ENCODE measurements at regions of chr9 and their contacts with region 1.

Region 1: GRCh38 chr9:18910916-18911315 is 122.1 kb downstream of the SAXO1 start:
- DNase-seq: peak in 2 of 4 donors; percentile 11 to 39
- ATAC-seq: no peak
- H3K4me3 ChIP-seq: no peak overlapping the region
- H3K27ac ChIP-seq: no peak overlapping the region
- H3K4me1 ChIP-seq: no peaks in the 10 kb centered on the region
- H3K27me3 ChIP-seq: no peaks in the 10 kb centered on the region
- CTCF ChIP-seq: no peak

Region 2: GRCh38 chr9:18555105-18555883 is 355.6 kb before region 1 on chr9:
- intact Hi-C with region 1: no loop called
- DNase-seq: no peak
- ATAC-seq: peak; percentile 32
- H3K4me3 ChIP-seq: no peak overlapping the region
- H3K27ac ChIP-seq: no peak overlapping the region
- H3K4me1 ChIP-seq: no peaks in the 10 kb centered on the region
- H3K27me3 ChIP-seq: no peaks in the 10 kb centered on the region
- CTCF ChIP-seq: no peak

Region 3: DNA sequence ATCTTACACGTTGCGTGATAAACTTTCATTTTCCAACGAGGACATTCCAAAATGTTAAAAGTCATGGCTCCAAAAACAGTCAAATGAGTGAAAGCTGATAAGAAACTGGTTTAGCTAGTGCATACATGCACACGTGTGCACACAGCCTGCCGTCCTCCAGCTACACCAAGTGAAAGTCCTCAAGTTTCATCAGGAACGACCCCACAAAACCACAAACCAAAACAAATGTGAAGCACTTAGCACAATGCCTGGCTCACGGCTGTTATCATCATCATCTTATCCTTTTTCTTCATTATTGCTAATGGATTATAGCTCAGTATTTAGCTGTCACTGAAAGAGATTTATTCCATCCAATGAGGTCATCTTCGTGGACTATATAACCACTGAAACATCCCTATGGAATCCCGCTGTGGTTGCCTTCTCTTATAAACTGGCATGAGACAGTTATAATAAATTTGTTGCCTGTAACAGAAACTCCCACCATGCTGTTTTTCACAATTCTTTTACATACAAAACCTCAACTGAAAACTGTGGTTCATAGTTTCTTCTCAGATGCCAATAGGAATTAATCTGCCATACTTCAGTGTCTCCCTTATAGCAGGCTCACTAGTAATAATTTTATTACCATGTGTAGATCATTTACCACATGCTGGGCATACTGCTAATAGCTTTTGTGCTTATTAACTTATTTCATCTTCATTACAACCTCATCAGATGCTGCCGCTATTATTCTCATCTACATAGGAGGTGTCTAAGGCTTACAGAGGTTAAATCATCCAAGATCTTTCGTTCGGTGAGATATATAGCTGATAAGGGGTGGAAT is 66.0 kb after region 1 on chr9:
- intact Hi-C with region 1: loop called in 1 of 2 experiments (anchors 10 kb)
- DNase-seq: peak in 1 of 4 donors; percentile 64
- ATAC-seq: peak; percentile 51
- H3K4me3 ChIP-seq: no peak overlapping the region
- H3K27ac ChIP-seq: no peak overlapping the region
- H3K4me1 ChIP-seq: no peaks in the 10 kb centered on the region
- H3K27me3 ChIP-seq: no peaks in the 10 kb centered on the region
- CTCF ChIP-seq: no peak